PC-3 (cell line): ENCODE measurements at regions of chr10 and their contacts with region 1.

Region 1: DNA sequence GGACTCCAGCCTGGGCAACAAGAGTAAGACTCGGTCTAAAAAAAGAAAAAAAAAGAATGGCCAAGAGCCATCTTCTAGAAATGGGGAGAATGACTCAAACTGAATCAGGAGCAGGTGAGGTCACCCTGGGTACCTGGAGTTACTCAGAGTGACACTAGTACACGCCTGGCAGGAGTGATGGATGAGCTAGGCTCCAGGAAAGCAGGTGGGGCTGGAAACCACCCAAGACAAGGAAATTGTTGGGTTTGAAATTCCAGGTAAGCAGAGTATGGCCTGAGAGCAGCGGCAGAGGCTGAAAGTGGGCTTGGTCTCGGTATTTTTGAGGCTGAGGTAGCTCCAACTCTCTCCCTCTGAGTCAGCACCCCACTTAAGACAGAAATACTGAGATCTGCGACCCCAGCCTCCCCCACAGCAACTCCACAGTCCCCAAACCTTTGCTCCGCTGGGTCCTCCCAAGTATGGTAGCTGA is 18.5 kb downstream of the DDIT4 start:
- DNase-seq: peak; percentile 93
- ATAC-seq: peak; percentile 81
- H3K4me3 ChIP-seq: no peak overlapping the region
- H3K27ac ChIP-seq: peak overlapping the region; percentile 92
- H3K4me1 ChIP-seq: peaks cover 32% of the 10 kb centered on the region
- H3K27me3 ChIP-seq: no peaks in the 10 kb centered on the region
- CTCF ChIP-seq: no peak

Region 2: GRCh38 chr10:71143610-71144009 is 1148.6 kb before region 1 on chr10:
- CTCF ChIA-PET with region 1: no interaction called
- POLR2A ChIA-PET with region 1: no interaction called
- intact Hi-C with region 1: no loop called
- DNase-seq: no peak
- ATAC-seq: no peak
- H3K4me3 ChIP-seq: no peak overlapping the region
- H3K27ac ChIP-seq: no peak overlapping the region
- H3K4me1 ChIP-seq: no peaks in the 10 kb centered on the region
- H3K27me3 ChIP-seq: peaks cover 37% of the 10 kb centered on the region
- CTCF ChIP-seq: no peak

Region 3: DNA sequence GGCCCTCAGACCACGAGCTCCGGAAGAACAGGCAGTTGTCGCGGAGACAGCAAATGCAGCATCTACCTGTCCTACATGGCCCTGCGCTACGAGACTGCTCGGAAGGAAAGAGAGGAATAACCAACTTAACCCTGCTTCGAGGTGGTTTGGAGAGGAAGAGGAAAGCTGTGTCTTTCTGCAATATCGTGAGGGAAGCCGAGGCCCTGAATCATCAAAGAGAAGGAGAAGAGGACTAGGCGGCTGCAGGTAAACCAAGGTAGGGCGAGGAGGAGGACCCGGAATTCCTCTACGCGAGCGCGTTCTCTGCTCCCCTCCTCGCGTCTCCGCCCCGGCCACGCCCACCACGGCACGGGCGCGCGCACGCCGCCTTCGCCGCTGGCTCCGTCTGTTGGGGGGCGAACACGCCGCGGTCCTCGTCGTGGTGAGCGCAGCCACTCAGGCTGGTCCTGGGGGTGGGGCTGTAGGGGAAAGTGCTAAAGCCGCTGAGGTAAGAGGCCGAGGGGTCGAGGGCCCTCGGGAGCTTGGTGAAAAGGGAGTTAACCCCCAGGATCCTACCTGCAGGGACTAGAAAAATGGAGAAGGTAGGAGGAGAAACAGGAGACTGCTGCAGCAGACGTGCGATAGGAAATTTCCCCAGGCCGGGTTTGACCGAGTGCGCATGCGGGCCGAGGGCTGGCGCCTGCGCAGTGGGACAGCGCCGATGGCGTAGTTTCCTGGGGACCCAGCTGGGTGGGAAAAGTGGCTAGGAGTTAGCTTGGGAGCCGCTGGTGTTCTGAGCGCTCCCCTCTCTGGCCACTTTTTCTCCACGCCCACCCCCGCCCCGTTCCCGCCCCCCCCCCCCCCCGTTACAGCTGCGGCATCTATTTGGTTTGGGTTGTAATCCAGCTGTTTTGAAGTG is 76.4 kb before region 1 on chr10 and contains the starts of genes ANAPC16 and ASCC1:
- CTCF ChIA-PET with region 1: no interaction called
- POLR2A ChIA-PET with region 1: no interaction called
- intact Hi-C with region 1: no loop called
- DNase-seq: peak; percentile 88
- ATAC-seq: peak; percentile 85
- H3K4me3 ChIP-seq: peak within 1 kb of the TSS; percentile 98
- H3K27ac ChIP-seq: peak within 1 kb of the TSS; percentile 96
- H3K4me1 ChIP-seq: peaks cover 19% of the 10 kb centered on the region; the same call in 1 of the 2 replicates
- H3K27me3 ChIP-seq: no peaks in the 10 kb centered on the region
- CTCF ChIP-seq: no peak
- total RNA-seq, gene ANAPC16: 19.2 and 23.9 TPM in 2 replicates
- total RNA-seq, gene ASCC1: 15.7 and 24.3 TPM in 2 replicates

Region 4: GRCh38 chr10:72344932-72345331 is 52.7 kb after region 1 on chr10:
- CTCF ChIA-PET with region 1: no interaction called
- POLR2A ChIA-PET with region 1: interaction called, 14 read pairs
- intact Hi-C with region 1: no loop called
- DNase-seq: no peak
- ATAC-seq: no peak
- H3K4me3 ChIP-seq: no peak overlapping the region
- H3K27ac ChIP-seq: no peak overlapping the region
- H3K4me1 ChIP-seq: no peaks in the 10 kb centered on the region
- H3K27me3 ChIP-seq: no peaks in the 10 kb centered on the region
- CTCF ChIP-seq: no peak

Region 5: GRCh38 chr10:72612203-72612826 is 320.1 kb after region 1 on chr10:
- CTCF ChIA-PET with region 1: no interaction called
- POLR2A ChIA-PET with region 1: no interaction called
- intact Hi-C with region 1: no loop called
- DNase-seq: peak; percentile 4
- ATAC-seq: no peak
- H3K4me3 ChIP-seq: no peak overlapping the region
- H3K27ac ChIP-seq: no peak overlapping the region
- H3K4me1 ChIP-seq: no peaks in the 10 kb centered on the region
- H3K27me3 ChIP-seq: no peaks in the 10 kb centered on the region
- CTCF ChIP-seq: no peak